ENCODE measurements at regions of chr1 and their contacts with region 1.

Region 1: DNA sequence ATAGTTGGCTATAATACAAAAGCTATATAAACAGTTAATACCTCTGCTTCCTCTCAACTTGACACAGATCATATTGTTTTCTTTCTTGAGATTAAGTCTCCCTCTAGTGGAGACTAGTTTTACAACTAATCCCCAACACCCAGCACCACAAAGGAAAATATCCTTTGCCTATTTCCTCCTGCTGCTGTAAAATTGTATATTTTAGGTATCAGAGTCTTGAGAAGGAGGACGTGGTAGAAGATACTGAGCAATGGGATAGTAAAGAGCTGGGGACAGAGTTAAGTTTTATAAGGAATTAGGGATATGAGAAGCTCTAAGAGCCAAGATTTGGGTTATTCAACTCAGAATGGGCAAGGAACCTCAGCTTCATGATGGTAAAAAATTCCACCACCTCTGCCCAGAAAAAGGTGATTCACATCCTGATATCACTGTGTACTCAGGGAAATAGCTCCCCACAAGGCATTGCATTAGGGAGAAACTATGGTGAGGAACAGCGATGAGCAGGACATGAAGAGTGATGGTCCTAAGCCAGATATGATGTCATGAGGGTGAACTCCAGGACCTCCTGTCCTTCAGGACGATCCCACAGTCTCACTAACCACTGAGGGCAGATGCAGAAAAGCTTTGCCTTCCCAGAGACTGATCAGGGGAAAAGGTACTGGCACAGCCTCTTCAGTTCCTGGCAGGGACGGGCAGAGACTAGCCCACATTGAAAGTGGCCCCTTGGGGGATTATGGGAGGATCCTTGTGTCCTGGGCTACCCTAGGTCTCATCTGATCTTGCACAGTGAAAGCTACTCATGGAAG is 14.7 kb upstream of the CFAP126 start:
- DNase-seq: peak; percentile 58 to 73
- ATAC-seq: peak; percentile 90 to 92
- H3K4me3 ChIP-seq: no peak overlapping the region
- H3K27ac ChIP-seq: peak overlapping the region; percentile 61 to 73
- H3K4me1 ChIP-seq: peaks cover 11% of the 10 kb centered on the region
- CTCF ChIP-seq: peak; percentile 81
- EP300 ChIP-seq: no peak
- POLR2A ChIP-seq: no peak
- RAD21 ChIP-seq: peak; percentile 78 to 80

Region 2: GRCh38 chr1:160904783-160905616 is 477.4 kb before region 1 on chr1:
- CTCF ChIA-PET with region 1: no interaction called
- POLR2A ChIA-PET with region 1: no interaction called
- DNase-seq: no peak
- ATAC-seq: no peak
- H3K4me3 ChIP-seq: no peak overlapping the region
- H3K27ac ChIP-seq: no peak overlapping the region
- H3K4me1 ChIP-seq: no peaks in the 10 kb centered on the region
- CTCF ChIP-seq: no peak
- EP300 ChIP-seq: no peak
- POLR2A ChIP-seq: no peak
- RAD21 ChIP-seq: no peak

Region 3: GRCh38 chr1:161165742-161166668 is 216.4 kb before region 1 on chr1 and contains the start of gene PPOX:
- CTCF ChIA-PET with region 1: interaction called, 28 read pairs
- POLR2A ChIA-PET with region 1: no interaction called
- DNase-seq: peak; percentile 97 to 99
- ATAC-seq: peak; percentile 95 to 97
- H3K4me3 ChIP-seq: peak within 1 kb of the TSS; percentile 62
- H3K27ac ChIP-seq: peak within 1 kb of the TSS; percentile 77 to 92
- H3K4me1 ChIP-seq: peaks cover 16% of the 10 kb centered on the region
- CTCF ChIP-seq: peak; percentile 66
- EP300 ChIP-seq: no peak
- POLR2A ChIP-seq: peak; percentile 70
- RAD21 ChIP-seq: no peak
- polyA plus RNA-seq, gene PPOX: 13.8 and 16.4 TPM in 2 replicates

Region 4: DNA sequence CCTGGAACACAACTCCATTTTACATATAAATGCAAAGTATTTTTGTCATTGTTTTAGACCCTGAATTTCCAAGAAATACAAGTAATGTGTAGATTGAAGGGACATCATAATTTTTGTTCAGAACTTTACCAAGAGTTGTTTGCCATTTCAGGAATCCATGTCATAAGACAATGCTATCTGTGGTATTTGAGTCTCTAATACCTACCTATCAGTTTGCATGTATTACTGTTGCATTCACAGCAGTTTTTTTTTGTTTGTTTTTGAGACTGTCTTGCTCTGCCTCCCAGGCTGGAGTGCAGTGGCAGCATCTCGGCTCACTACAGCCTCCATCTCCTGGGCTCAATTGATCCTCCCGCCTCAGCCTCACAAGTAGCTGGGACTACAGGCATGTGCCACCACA is 89.8 kb before region 1 on chr1:
- CTCF ChIA-PET with region 1: interaction called, 23 read pairs
- POLR2A ChIA-PET with region 1: no interaction called
- DNase-seq: no peak
- ATAC-seq: no peak
- H3K4me3 ChIP-seq: no peak overlapping the region
- H3K27ac ChIP-seq: no peak overlapping the region
- H3K4me1 ChIP-seq: no peaks in the 10 kb centered on the region
- CTCF ChIP-seq: no peak
- EP300 ChIP-seq: no peak
- POLR2A ChIP-seq: no peak
- RAD21 ChIP-seq: no peak

Region 5: DNA sequence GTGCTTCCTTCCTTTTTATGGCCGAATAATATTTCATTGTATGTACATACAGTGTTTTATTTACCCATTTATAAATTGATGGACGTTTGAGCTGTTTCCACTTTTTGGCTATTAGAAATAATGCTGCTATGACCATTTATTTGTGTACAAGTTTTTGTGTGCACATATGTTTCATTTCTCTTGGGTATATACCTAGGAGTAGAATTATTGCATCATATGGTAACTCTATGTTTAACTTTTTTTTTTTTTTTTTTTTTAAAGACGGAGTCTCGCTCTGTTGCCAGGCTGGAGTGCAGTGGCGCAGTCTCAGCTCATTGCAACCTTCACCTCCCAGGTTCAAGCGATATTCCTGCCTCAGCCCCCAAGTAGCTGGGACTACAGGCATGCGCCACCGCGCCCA is 49.3 kb before region 1 on chr1:
- CTCF ChIA-PET with region 1: interaction called, 14 read pairs
- POLR2A ChIA-PET with region 1: no interaction called
- DNase-seq: no peak
- ATAC-seq: no peak
- H3K4me3 ChIP-seq: no peak overlapping the region
- H3K27ac ChIP-seq: no peak overlapping the region
- H3K4me1 ChIP-seq: no peaks in the 10 kb centered on the region
- CTCF ChIP-seq: no peak
- EP300 ChIP-seq: no peak
- POLR2A ChIP-seq: no peak
- RAD21 ChIP-seq: no peak

Region 6: GRCh38 chr1:161367684-161368400 is 14.6 kb before region 1 on chr1 and contains the start of gene CFAP126:
- CTCF ChIA-PET with region 1: interaction called, 69 read pairs
- POLR2A ChIA-PET with region 1: interaction called, 4 read pairs
- DNase-seq: peak; percentile 73 to 77
- ATAC-seq: peak; percentile 92 to 99
- H3K4me3 ChIP-seq: no peak within 1 kb of the TSS
- H3K27ac ChIP-seq: no peak within 1 kb of the TSS
- H3K4me1 ChIP-seq: peaks cover 8% of the 10 kb centered on the region; the same call in 1 of the 3 replicates
- CTCF ChIP-seq: peak; percentile 21; the same call in 1 of the 3 replicates
- EP300 ChIP-seq: no peak
- POLR2A ChIP-seq: no peak
- RAD21 ChIP-seq: no peak
- polyA plus RNA-seq, gene CFAP126: not detected in 2 replicates

Region 7: DNA sequence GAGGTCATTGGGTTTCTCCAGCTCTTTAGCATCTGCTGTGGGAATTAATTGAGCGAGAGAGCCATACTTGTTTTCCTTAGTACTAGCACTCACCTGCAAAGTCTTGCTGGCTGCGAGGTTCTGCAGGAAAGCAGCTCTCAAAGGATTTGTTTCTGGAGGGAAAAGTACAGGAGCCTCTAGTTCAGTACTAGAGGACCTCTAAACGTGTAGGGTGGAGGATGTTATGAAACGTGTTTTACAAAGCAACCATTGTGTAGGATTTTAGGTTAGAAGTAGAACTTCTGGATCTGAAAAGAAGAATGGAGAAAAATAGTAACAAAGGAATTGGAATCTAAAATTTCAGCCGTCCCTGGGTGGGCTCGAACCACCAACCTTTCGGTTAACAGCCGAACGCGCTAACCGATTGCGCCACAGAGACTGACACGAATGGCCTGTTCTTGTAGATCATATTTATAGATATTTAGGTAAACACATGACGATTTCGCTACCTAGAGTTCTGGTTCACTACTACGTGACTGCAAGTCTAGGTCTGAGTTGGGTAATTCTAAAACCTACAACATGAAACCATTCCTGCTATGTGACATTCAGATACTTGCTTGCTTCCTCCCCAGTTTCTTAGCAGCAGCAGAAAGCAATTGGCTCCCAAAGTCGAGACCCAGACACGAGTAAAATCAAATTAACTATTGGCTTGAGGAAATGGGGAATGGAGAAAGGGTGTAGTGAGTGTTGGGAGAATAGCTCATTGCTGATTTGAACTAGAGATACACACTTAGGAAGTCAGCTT is 45.5 kb after region 1 on chr1:
- CTCF ChIA-PET with region 1: interaction called, 10 read pairs
- POLR2A ChIA-PET with region 1: no interaction called
- DNase-seq: peak; percentile 51 to 82
- ATAC-seq: peak; percentile 80 to 88
- H3K4me3 ChIP-seq: peak overlapping the region; percentile 57
- H3K27ac ChIP-seq: peak overlapping the region; percentile 28 to 53; a peak in 4 of 6 replicates
- H3K4me1 ChIP-seq: peaks cover 8% of the 10 kb centered on the region; the same call in 2 of the 3 replicates
- CTCF ChIP-seq: no peak
- EP300 ChIP-seq: no peak
- POLR2A ChIP-seq: no peak
- RAD21 ChIP-seq: no peak

Region 8: DNA sequence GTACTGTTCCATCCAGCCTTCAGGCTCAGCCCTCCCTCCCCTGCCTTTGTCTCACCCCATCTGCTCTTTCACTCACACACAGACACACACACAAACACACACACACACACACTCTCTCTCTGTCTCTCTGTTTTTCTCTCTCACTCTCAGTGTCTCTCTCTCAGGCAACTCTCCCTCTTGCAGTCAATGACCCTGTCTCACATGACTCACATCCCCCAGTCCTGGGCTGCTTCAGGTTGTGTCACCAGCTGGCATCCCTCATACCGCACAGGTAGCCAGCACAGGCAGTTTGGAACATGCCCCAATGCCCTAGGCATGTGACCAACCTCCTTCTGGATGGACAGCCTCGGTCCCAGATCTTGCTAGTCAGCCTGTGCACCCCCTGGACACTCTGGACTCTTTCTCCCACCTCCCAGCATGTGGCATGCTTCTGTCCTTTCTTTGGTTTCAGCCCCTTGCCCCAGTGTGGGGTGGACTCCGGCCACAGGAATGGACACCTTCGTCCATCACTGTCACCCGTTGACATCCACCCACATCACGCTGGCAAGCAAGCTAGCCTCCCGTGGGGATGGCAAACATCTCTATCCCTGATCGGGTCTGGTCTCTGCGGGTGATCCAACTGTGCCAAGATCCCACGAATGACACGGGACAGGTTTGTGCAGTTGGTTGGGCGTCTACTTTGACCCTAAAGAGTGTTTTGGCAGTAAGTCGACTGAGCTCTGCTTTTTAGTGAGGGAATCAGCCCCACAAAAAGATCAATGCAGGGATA is 99.4 kb after region 1 on chr1:
- CTCF ChIA-PET with region 1: no interaction called
- POLR2A ChIA-PET with region 1: no interaction called
- DNase-seq: no peak
- ATAC-seq: peak; percentile 14 to 21; a peak in 2 of 6 replicates
- H3K4me3 ChIP-seq: no peak overlapping the region
- H3K27ac ChIP-seq: no peak overlapping the region
- H3K4me1 ChIP-seq: peaks cover 11% of the 10 kb centered on the region; the same call in 1 of the 3 replicates
- CTCF ChIP-seq: no peak
- EP300 ChIP-seq: no peak
- POLR2A ChIP-seq: no peak
- RAD21 ChIP-seq: no peak

Region 9: DNA sequence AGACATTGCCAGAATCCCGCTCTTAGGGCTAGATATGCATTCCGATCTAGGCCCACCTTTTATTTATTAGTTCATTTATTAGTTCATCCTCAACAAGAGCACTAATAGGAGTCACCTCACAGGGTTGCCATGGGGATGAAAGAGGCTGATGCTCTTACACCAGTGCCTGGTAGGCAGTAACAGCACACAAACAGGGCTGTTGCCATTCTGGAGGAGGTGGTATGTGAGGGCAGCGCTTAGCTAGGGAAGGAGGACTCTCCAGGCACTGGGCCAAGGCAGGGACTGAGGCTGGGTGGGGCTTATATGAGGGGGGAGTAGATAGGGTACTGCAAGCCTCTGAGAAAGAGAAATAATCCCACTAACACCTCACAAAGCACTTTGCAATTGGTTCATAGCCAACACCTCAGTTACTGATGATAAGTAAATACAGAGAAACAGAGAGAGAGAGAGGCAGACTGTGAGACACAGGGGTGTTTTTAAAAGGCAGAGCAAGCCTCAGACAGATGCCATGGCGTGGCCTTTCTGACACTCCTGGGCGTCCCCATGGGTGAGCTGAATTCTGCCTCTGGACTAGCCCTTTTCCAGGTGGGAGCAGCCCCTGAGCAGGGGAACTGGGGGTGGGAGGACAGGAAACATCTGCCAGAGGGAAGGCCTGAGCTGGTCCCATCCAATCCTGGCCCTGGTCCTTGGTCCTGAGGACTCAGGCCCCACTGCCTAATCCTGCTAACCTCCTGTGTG is 128.8 kb after region 1 on chr1:
- CTCF ChIA-PET with region 1: no interaction called
- POLR2A ChIA-PET with region 1: no interaction called
- DNase-seq: no peak
- ATAC-seq: no peak
- H3K4me3 ChIP-seq: no peak overlapping the region
- H3K27ac ChIP-seq: no peak overlapping the region
- H3K4me1 ChIP-seq: peaks cover 5% of the 10 kb centered on the region; the same call in 2 of the 3 replicates
- CTCF ChIP-seq: no peak
- EP300 ChIP-seq: no peak
- POLR2A ChIP-seq: no peak
- RAD21 ChIP-seq: no peak

Measured in A549 (cell line).